Caco-2 (cell line): ENCODE measurements at regions of chr11 and their contacts with region 1.

Region 1: DNA sequence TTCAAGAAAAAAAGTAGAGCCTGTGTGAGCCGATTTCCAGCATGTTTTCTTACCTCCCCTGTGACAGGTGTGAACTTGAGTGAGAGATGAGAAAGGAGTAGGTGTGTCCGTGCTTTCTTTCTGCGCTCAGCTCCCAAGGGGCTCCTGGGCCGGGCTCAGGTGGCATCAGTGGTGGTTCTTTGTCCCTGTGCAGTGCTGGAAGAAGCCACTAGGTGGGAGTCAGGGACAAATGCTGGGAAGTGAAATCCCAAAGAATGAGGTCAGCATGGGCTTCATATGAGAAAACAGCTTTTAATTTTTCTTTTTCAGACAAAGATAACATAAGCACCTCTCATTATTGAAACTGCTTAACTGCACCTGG is 57.8 kb downstream of the PPFIBP2 start:
- DNase-seq: peak; percentile 79 to 86
- H3K4me3 ChIP-seq: no peak overlapping the region
- H3K4me3 Mint-ChIP-seq: no peak overlapping the region
- H3K27ac Mint-ChIP-seq: peak overlapping the region; percentile 90
- H3K4me1 ChIP-seq: peaks cover 51% of the 10 kb centered on the region
- H3K4me1 Mint-ChIP-seq: peaks cover 48% of the 10 kb centered on the region
- H3K27me3 ChIP-seq: no peaks in the 10 kb centered on the region
- H3K27me3 Mint-ChIP-seq: no peaks in the 10 kb centered on the region
- CTCF ChIP-seq: peak; percentile 92 to 95

Region 2: GRCh38 chr11:7353100-7353499 is 218.5 kb before region 1 on chr11:
- CTCF ChIA-PET with region 1: no interaction called
- POLR2A ChIA-PET with region 1: no interaction called
- intact Hi-C with region 1: loop called (anchors 2 kb)
- DNase-seq: peak; percentile 39 to 63
- H3K4me3 ChIP-seq: no peak overlapping the region
- H3K4me3 Mint-ChIP-seq: no peak overlapping the region
- H3K27ac Mint-ChIP-seq: no peak overlapping the region
- H3K4me1 ChIP-seq: no peaks in the 10 kb centered on the region
- H3K4me1 Mint-ChIP-seq: no peaks in the 10 kb centered on the region
- H3K27me3 ChIP-seq: no peaks in the 10 kb centered on the region; the same call in 1 of the 2 replicates
- H3K27me3 Mint-ChIP-seq: peaks cover 15% of the 10 kb centered on the region
- CTCF ChIP-seq: peak; percentile 63 to 76

Region 3: DNA sequence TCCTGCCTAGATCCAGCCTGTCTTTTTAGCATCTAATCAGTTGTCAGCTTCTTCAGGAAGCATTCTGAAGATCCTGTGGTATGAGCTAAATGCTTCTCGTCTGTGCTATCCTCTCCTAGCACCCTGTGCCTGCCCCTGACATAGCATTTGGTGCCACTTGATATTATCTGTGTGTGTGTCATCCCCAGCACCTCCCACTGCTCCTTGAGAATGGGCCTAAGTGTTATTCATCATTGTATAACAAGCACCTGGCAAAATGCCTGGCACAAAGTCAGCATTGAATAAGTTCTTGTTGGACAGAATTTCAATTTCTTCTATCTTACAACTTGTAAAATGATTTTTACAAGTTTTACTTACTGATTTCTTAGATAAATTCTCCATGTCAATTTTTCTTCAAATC is 114.4 kb before region 1 on chr11:
- CTCF ChIA-PET with region 1: no interaction called
- POLR2A ChIA-PET with region 1: no interaction called
- intact Hi-C with region 1: no loop called
- DNase-seq: no peak
- H3K4me3 ChIP-seq: no peak overlapping the region
- H3K4me3 Mint-ChIP-seq: no peak overlapping the region
- H3K27ac Mint-ChIP-seq: no peak overlapping the region
- H3K4me1 ChIP-seq: no peaks in the 10 kb centered on the region
- H3K4me1 Mint-ChIP-seq: no peaks in the 10 kb centered on the region
- H3K27me3 ChIP-seq: no peaks in the 10 kb centered on the region; the same call in 1 of the 2 replicates
- H3K27me3 Mint-ChIP-seq: peaks cover 11% of the 10 kb centered on the region
- CTCF ChIP-seq: no peak

Region 4: DNA sequence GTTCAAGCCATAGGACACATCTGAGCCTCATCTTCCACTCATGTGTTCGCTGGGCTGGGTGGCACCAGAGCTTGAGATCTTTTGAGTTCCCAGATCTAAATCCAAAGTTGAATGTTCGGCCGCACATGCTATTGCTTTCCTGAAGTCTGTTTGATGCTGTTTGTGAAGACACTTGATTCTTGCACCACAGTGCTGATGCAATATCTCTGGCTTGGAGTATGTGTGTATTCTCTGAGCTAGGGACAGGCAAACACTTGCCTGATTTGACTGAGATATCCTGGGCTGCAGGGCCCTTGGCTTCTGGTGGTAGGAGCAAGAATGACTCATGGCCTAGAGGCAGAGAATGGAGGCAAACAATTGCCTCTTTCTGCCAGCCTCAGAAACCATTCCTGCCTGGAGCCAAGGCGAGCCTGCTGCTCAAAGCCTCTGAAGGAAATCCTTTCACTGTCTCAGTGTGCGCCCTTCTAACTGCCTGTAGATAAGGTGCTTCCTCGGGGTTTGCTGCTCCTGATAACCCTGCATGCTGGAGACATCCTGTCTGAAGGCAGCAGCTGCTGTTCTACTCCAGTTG is 28.7 kb after region 1 on chr11:
- CTCF ChIA-PET with region 1: interaction called, 11 read pairs
- POLR2A ChIA-PET with region 1: interaction called, 47 read pairs
- intact Hi-C with region 1: loop called (anchors 1 kb)
- DNase-seq: peak; percentile 81 to 87
- H3K4me3 ChIP-seq: no peak overlapping the region
- H3K4me3 Mint-ChIP-seq: peak overlapping the region; percentile 19
- H3K27ac Mint-ChIP-seq: peak overlapping the region; percentile 79
- H3K4me1 ChIP-seq: peaks cover 68% of the 10 kb centered on the region
- H3K4me1 Mint-ChIP-seq: peaks cover 36% of the 10 kb centered on the region
- H3K27me3 ChIP-seq: no peaks in the 10 kb centered on the region
- H3K27me3 Mint-ChIP-seq: no peaks in the 10 kb centered on the region
- CTCF ChIP-seq: no peak

Region 5: DNA sequence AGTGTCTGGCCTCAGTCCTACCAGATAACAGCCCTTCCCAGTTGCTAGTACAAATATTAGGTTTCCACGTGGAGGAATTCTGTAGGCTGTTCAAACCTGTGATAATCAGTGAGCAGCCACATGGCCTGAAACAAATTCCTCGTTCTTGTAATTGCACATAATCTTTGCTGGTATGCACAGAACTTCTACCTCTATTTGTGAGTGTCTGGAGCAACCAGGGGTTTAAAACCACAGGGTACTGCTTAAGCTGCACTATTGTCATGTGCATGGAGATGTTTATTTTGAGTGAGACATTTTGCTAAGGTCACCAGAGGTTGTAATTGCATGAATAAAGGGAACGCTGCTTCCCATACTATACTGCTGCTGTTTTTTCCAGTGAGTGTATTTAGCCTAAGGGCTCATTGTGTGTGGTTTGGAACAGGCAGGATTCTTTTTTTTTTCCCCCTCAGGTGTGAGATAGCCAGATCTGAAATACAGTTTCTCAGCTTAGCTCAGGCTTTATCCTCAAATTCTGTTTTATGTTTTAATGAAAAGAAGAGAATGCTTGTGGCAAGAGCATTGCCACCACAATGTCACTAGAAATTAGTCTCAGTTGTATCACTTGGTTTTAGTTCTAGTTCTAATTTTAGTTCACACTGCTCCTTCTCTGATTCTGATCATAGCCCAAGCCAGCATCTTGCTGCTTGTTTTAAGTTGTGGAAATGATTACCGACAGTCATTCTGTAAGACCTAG is 41.2 kb after region 1 on chr11:
- CTCF ChIA-PET with region 1: interaction called, 9 read pairs
- POLR2A ChIA-PET with region 1: interaction called, 3 read pairs
- intact Hi-C with region 1: loop called (anchors 1 kb)
- DNase-seq: peak; percentile 79 to 81
- H3K4me3 ChIP-seq: no peak overlapping the region
- H3K4me3 Mint-ChIP-seq: peak overlapping the region; percentile 61
- H3K27ac Mint-ChIP-seq: peak overlapping the region; percentile 73
- H3K4me1 ChIP-seq: peaks cover 63% of the 10 kb centered on the region
- H3K4me1 Mint-ChIP-seq: peaks cover 44% of the 10 kb centered on the region
- H3K27me3 ChIP-seq: no peaks in the 10 kb centered on the region
- H3K27me3 Mint-ChIP-seq: no peaks in the 10 kb centered on the region
- CTCF ChIP-seq: no peak

Region 6: DNA sequence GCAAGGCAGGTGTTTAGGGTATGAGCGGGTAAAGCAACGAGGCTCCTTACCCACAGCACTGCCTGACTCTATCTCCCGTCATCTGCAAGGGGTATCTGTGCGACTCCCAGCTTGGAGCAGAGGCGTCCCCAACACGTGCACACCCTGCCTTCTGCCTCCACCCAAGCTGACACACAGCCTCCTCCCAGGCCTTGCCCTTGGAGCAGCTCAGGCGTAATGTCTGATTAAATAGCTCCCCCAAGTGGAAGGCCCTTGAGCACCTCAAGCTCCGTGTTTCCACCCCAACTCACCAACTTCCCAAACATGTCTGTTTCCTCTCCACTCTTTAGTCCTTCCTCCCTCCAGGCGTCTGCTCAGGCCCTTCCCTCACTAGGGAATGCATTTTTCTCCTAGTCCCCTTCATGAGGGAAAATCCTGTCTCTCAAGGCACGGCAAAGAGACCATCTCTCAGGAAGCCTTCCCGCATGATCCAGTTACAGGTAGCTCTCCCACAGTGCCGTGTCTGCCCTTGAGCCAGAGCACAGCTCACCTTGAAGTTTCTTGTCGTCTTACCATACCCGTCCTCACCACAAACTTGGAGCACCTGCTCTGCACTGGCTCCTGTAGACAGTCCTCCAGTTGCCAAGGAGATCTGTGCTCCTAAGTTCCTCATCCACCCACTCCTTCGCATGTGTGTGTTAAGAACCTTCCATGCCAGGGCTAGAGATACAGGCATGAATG is 85.8 kb after region 1 on chr11:
- CTCF ChIA-PET with region 1: interaction called, 28 read pairs
- POLR2A ChIA-PET with region 1: no interaction called
- intact Hi-C with region 1: loop called (anchors 1 kb)
- DNase-seq: peak; percentile 52 to 53
- H3K4me3 ChIP-seq: no peak overlapping the region
- H3K4me3 Mint-ChIP-seq: no peak overlapping the region
- H3K27ac Mint-ChIP-seq: peak overlapping the region; percentile 7
- H3K4me1 ChIP-seq: no peaks in the 10 kb centered on the region
- H3K4me1 Mint-ChIP-seq: peaks cover under 1% of the 10 kb centered on the region
- H3K27me3 ChIP-seq: no peaks in the 10 kb centered on the region
- H3K27me3 Mint-ChIP-seq: no peaks in the 10 kb centered on the region
- CTCF ChIP-seq: peak; percentile 37 to 49

Region 7: DNA sequence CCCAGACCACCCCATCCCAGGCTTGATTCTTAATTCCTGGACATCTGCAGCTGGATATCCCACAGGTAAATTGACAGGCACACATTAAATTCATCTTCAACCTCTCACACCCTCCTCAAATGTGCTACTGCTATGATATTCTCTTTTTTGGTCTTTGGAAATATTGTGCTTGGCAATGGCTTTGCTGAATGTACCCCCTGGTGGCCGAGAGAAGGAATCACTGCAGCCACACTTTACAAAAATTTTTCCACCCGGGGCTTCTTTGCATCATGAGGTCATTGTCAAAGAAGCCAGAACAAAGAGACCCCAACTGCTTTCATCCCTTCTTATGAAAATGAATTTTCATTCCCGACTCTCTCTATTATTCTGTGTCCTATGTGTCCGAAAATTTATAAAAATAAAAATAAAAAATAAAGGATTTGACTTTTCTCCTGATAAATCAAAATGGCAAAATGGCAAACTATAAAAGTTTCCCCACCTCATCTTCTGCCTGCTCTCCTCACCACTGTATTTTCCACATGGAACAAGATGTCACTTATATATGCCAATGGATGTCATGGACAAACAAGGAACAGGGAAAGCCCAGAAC is 116.7 kb after region 1 on chr11:
- CTCF ChIA-PET with region 1: no interaction called
- POLR2A ChIA-PET with region 1: no interaction called
- intact Hi-C with region 1: loop called (anchors 1 kb)
- DNase-seq: peak in 1 of 2 experiments; percentile 49
- H3K4me3 ChIP-seq: no peak overlapping the region
- H3K4me3 Mint-ChIP-seq: no peak overlapping the region
- H3K27ac Mint-ChIP-seq: no peak overlapping the region
- H3K4me1 ChIP-seq: peaks cover 15% of the 10 kb centered on the region
- H3K4me1 Mint-ChIP-seq: peaks cover 20% of the 10 kb centered on the region
- H3K27me3 ChIP-seq: no peaks in the 10 kb centered on the region
- H3K27me3 Mint-ChIP-seq: no peaks in the 10 kb centered on the region
- CTCF ChIP-seq: peak; percentile 83 to 91